Gastrocnemius medialis (tissue), 4 donors: ENCODE measurements at regions of chr2 and their contacts with region 1.

Region 1: GRCh38 chr2:97806738-97807618 is 93.6 kb downstream of the ZAP70 start:
- DNase-seq: peak; percentile 74 to 83
- ATAC-seq: peak; percentile 88 to 95
- H3K4me3 ChIP-seq: no peak overlapping the region
- H3K27ac ChIP-seq: peak overlapping the region; percentile 65 to 77 (median 74)
- H3K4me1 ChIP-seq: peaks cover 8 to 15% of the 10 kb centered on the region in 2 donors
- H3K27me3 ChIP-seq: no peaks in the 10 kb centered on the region
- CTCF ChIP-seq: peak; percentile 90 to 96 (median 95)
- POLR2A ChIP-seq: no peak

Region 2: DNA sequence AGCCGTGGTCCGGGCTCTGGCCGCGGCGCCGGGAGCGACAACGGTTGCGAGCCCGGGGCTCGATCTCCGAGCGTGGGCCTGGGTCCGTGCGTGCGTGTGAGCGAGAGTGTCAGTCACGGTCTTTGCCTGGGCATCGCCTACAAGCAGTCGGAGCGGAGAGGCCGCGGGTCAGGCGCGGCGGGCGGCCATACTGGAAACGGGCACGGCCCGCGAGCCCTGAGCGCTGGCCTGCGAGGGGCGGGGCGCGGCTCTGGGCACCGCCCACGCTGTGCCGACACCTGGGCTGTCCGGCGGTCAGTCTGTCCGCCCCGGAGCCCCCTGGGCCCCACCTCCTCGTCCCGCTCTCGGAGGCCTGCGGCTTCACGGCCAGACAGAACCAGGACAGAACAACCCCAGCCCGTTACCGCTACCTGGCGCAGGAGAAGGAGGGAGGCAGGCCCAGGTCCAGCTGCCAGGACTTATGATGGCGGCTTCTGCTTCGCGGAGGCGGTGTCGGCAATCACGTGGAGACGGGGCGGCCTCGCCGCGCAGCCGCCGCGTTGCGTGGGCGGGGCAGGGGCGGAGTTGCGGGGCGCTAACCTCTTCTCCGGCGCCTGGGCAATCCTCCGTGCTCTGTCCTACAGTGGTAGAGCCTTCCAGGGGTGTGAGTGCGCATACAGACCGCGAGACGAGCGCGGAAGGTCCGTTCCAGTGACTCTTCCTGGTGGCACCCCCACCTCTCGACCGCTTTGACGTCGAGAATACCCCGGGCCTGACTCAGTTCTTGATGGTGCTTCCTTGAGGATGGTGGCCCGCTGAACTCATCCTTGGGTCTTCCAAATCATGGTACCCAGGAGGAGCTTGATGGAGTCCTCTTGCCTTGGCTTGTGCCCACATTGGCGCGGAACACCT is 189.0 kb after region 1 on chr2 and contains the start of gene TMEM131:
- in situ Hi-C with region 1: no loop called
- intact Hi-C with region 1: loop called (anchors 10 kb)
- DNase-seq: peak; percentile 88 to 91
- ATAC-seq: peak; percentile 91 to 92
- H3K4me3 ChIP-seq: peak within 1 kb of the TSS; percentile 72 to 97 (median 80)
- H3K27ac ChIP-seq: peak within 1 kb of the TSS; percentile 90 to 100 (median 96)
- H3K4me1 ChIP-seq: peaks cover 36 to 44% of the 10 kb centered on the region in 2 donors
- H3K27me3 ChIP-seq: no peaks in the 10 kb centered on the region
- CTCF ChIP-seq: no peak
- POLR2A ChIP-seq: peak; percentile 68 to 82
- total RNA-seq, gene TMEM131: 10.3 to 39.2 (median 20.0) TPM

Region 3: GRCh38 chr2:98036349-98037000 is 229.5 kb after region 1 on chr2:
- in situ Hi-C with region 1: no loop called
- intact Hi-C with region 1: loop called (anchors 5 kb)
- DNase-seq: peak; percentile 86 to 90
- ATAC-seq: peak; percentile 94
- H3K4me3 ChIP-seq: peak overlapping the region in 1 of 4 donors; percentile 27
- H3K27ac ChIP-seq: peak overlapping the region; percentile 67 to 77 (median 72)
- H3K4me1 ChIP-seq: peaks cover 39 to 40% of the 10 kb centered on the region in 2 donors
- H3K27me3 ChIP-seq: no peaks in the 10 kb centered on the region
- CTCF ChIP-seq: no peak
- POLR2A ChIP-seq: no peak

Region 4: GRCh38 chr2:98188351-98189049 is 381.5 kb after region 1 on chr2:
- in situ Hi-C with region 1: loop called in 2 of 4 experiments (anchors 25 kb)
- intact Hi-C with region 1: loop called (anchors 1 kb)
- DNase-seq: no peak
- ATAC-seq: peak; percentile 39 to 44
- H3K4me3 ChIP-seq: no peak overlapping the region
- H3K27ac ChIP-seq: no peak overlapping the region
- H3K4me1 ChIP-seq: peaks cover 3 to 8% of the 10 kb centered on the region in 2 donors
- H3K27me3 ChIP-seq: no peaks in the 10 kb centered on the region
- CTCF ChIP-seq: peak in 1 of 5 experiments; percentile 10
- POLR2A ChIP-seq: no peak

Region 5: DNA sequence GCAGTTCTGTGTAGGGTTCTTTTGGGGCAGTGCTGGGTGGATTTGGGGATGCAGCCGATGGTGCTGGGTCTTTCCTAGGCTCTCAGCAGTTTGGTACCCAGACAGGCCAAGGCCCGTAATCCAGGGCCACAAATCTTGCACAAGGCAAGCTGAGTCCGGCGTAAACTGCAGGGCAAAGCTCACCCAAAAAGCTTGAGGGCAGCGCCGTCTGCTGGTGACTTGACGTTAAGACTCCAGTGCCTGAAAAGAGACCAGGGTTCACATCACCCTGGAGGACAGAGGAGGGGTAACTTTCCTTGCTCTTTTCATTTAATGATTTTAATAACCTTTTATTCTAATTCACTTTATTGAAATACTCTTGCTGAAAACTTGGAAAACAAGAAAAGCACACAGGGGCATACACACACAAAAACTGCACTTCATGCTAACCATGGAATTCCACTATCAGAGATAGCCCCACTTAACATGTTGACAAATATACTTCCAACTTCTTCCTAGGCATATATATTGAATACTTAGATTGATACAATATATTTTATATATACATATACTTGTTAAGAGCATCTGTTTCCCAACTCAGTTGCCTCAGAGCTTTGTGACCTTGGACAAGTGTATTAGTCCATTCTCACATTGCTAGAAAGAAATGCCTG is 578.2 kb after region 1 on chr2:
- in situ Hi-C with region 1: loop called (anchors 5 to 10 kb)
- intact Hi-C with region 1: loop called (anchors 1 kb)
- DNase-seq: peak; percentile 22 to 43
- ATAC-seq: peak; percentile 56 to 92
- H3K4me3 ChIP-seq: no peak overlapping the region
- H3K27ac ChIP-seq: no peak overlapping the region
- H3K4me1 ChIP-seq: peaks cover 0 to 7% of the 10 kb centered on the region in 2 donors
- H3K27me3 ChIP-seq: no peaks in the 10 kb centered on the region
- CTCF ChIP-seq: peak; percentile 78 to 92 (median 81)
- POLR2A ChIP-seq: no peak